Panc1 (cell line): ENCODE measurements at regions of chr2 and their contacts with region 1.

Region 1: GRCh38 chr2:226799181-226799975 is at the start of gene IRS1:
- DNase-seq: no peak
- ATAC-seq: peak; percentile 37
- H3K4me3 ChIP-seq: peak within 1 kb of the TSS; percentile 73 to 79
- H3K27ac ChIP-seq: peak within 1 kb of the TSS; percentile 96
- H3K4me1 ChIP-seq: peaks cover 14% of the 10 kb centered on the region
- H3K27me3 ChIP-seq: no peaks in the 10 kb centered on the region
- CTCF ChIP-seq: peak; percentile 90
- total RNA-seq, gene IRS1: 27.3 TPM

Region 2: GRCh38 chr2:225889446-225889850 is 909.9 kb before region 1 on chr2:
- CTCF ChIA-PET with region 1: no interaction called
- POLR2A ChIA-PET with region 1: no interaction called
- in situ Hi-C with region 1: no loop called
- intact Hi-C with region 1: loop called (anchors 5 kb)
- DNase-seq: peak; percentile 18
- ATAC-seq: no peak
- H3K4me3 ChIP-seq: no peak overlapping the region
- H3K27ac ChIP-seq: peak overlapping the region; percentile 52; the same call in 1 of the 2 replicates
- H3K4me1 ChIP-seq: 0 out of 2 replicates have a peak, but pooled peaks cover 3% of the 10 kb centered on the region
- H3K27me3 ChIP-seq: no peaks in the 10 kb centered on the region
- CTCF ChIP-seq: peak; percentile 69; the same call in 1 of the 2 replicates

Region 3: GRCh38 chr2:226423498-226423960 is 375.8 kb before region 1 on chr2:
- CTCF ChIA-PET with region 1: no interaction called
- POLR2A ChIA-PET with region 1: no interaction called
- in situ Hi-C with region 1: no loop called
- intact Hi-C with region 1: loop called (anchors 5 kb)
- DNase-seq: no peak
- ATAC-seq: peak; percentile 85
- H3K4me3 ChIP-seq: peak overlapping the region; percentile 13 to 21; a peak in 1 of 4 replicates
- H3K27ac ChIP-seq: peak overlapping the region; percentile 59; the same call in 1 of the 2 replicates
- H3K4me1 ChIP-seq: peaks cover 16% of the 10 kb centered on the region; the same call in 1 of the 2 replicates
- H3K27me3 ChIP-seq: no peaks in the 10 kb centered on the region
- CTCF ChIP-seq: no peak

Region 4: DNA sequence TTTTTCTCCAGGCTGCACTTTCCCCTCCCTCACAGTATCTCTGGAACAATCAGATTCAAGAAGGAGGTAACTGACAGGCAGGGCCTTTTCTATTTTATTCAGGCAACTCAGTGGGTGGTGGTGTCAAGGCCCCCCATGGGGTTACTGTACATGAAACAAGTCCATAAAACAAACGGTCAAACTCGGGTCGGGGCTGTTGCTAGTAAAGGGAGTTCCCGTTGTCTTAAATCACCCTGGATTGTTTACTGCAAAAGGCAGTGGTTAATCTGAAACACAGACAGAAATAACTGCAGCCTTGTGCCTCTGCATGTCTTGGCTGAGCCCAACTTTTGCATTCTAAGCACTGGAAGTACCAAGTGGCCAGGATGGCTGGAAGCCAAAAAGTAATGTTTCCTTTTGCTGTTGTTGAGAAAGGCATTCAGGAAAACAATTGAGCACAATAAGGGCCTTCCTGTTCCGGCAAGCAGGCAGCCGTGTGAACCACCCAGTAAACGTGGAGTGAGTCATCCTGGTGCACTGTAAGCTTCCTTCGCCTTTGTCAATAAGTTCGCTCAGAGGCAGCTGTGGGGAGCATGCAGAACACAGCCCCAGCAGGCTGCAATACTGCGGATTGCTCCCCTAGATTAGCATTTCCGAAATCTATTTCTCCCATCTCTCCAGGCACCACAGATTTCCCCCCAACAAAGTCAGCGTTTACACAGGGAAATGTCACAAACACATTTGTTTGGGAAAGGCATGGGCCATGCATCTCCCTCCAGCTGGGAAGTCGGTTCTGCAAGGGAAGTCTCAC is 149.3 kb before region 1 on chr2:
- CTCF ChIA-PET with region 1: no interaction called
- POLR2A ChIA-PET with region 1: no interaction called
- in situ Hi-C with region 1: no loop called
- intact Hi-C with region 1: no loop called
- DNase-seq: peak; percentile 72
- ATAC-seq: peak; percentile 94
- H3K4me3 ChIP-seq: no peak overlapping the region
- H3K27ac ChIP-seq: peak overlapping the region; percentile 73
- H3K4me1 ChIP-seq: peaks cover 11% of the 10 kb centered on the region
- H3K27me3 ChIP-seq: no peaks in the 10 kb centered on the region
- CTCF ChIP-seq: no peak

Region 5: DNA sequence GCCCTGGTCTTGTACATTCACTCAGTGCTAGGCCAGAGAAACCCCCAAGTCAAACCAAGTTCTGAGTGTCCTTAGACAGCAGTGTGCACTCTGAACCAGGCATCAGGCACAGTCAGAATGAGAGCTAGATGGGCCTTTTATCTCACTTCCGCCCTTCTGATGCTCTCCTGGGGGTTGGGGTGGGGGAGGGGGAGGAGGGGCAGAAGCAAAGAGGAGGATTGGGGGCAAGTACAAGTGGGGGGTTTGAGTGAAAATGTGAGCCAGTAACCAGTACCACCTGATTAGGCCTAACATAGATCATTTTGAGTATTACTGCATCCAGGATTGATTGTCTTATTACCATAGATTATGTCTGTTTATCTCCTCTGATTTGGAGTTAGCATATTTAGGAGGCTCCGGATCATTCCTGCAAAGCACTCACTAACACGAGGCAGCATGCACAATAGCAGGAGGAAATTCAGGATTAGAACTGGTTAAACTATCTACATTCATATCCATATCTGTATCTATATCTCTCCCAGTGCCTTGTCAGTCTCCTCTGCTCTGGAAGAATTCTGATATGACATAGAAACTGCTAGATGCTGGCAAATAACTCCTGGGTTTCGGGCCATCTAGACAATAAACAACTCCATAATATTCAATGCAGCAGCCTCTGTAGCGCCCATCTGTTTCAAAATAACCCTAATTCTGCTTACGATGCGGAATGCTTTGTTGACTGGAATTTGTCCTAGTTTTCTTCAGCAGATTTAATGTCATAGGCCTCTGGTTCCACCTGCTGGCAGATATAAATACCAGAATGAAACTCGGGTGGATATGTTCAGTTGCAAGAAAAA is 185.6 kb after region 1 on chr2:
- CTCF ChIA-PET with region 1: no interaction called
- POLR2A ChIA-PET with region 1: no interaction called
- in situ Hi-C with region 1: no loop called
- intact Hi-C with region 1: loop called (anchors 2 kb)
- DNase-seq: peak; percentile 27
- ATAC-seq: peak; percentile 86
- H3K4me3 ChIP-seq: no peak overlapping the region
- H3K27ac ChIP-seq: no peak overlapping the region
- H3K4me1 ChIP-seq: no peaks in the 10 kb centered on the region
- H3K27me3 ChIP-seq: no peaks in the 10 kb centered on the region
- CTCF ChIP-seq: peak; percentile 80

Region 6: GRCh38 chr2:227106845-227107759 is 307.7 kb after region 1 on chr2:
- CTCF ChIA-PET with region 1: interaction called, 4 read pairs
- POLR2A ChIA-PET with region 1: no interaction called
- in situ Hi-C with region 1: no loop called
- intact Hi-C with region 1: loop called (anchors 5 kb)
- DNase-seq: peak; percentile 63
- ATAC-seq: peak; percentile 98
- H3K4me3 ChIP-seq: no peak overlapping the region
- H3K27ac ChIP-seq: no peak overlapping the region
- H3K4me1 ChIP-seq: no peaks in the 10 kb centered on the region
- H3K27me3 ChIP-seq: no peaks in the 10 kb centered on the region; the same call in 1 of the 2 replicates
- CTCF ChIP-seq: peak; percentile 94

Region 7: GRCh38 chr2:227370791-227371312 is 571.5 kb after region 1 on chr2:
- CTCF ChIA-PET with region 1: no interaction called
- POLR2A ChIA-PET with region 1: no interaction called
- in situ Hi-C with region 1: no loop called
- intact Hi-C with region 1: no loop called
- DNase-seq: no peak
- ATAC-seq: no peak
- H3K4me3 ChIP-seq: no peak overlapping the region
- H3K27ac ChIP-seq: no peak overlapping the region
- H3K4me1 ChIP-seq: no peaks in the 10 kb centered on the region
- H3K27me3 ChIP-seq: no peaks in the 10 kb centered on the region
- CTCF ChIP-seq: no peak